B cell (primary cell): ENCODE measurements at regions of chr15 and their contacts with region 1.

Region 1: DNA sequence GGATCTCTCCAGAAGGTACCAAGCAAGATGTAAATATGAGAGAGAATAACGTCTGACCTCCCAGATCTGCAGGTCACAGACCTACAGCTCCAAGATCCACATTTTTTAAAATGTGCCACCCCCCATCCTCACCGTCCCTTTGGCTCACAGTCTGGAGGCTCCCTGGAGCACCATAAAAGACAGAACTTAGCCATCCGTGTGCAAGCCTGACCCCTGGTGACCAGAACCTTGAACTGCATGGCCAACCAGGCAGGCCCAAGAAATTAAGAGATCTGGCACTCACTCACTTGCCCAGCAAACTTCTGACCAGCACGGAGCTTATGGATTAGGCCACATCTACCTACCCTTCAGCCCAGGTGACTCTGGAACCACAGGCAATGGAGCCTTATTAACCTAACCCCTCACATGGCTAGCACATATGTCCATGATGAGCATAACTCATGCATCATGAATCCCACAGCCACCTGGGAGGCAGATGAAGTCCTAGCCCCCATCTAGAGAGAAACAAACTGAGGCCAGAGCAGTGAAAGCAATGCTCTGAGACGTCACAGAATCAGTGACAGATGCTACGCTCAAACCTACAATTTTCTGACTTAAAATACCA is 275.3 kb downstream of the UACA start:
- DNase-seq: peak; percentile 81
- ATAC-seq: no peak
- H3K4me3 ChIP-seq: no peak overlapping the region
- H3K4me3 Mint-ChIP-seq: no peak overlapping the region
- H3K27ac ChIP-seq: no peak overlapping the region
- H3K27ac Mint-ChIP-seq: peak overlapping the region; percentile 52
- H3K4me1 ChIP-seq: peaks cover 44 to 55% of the 10 kb centered on the region in 2 donors
- H3K4me1 Mint-ChIP-seq: peaks cover 53% of the 10 kb centered on the region
- H3K27me3 ChIP-seq: no peaks in the 10 kb centered on the region
- H3K27me3 Mint-ChIP-seq: no peaks in the 10 kb centered on the region
- CTCF ChIP-seq: peak; percentile 92

Region 2: DNA sequence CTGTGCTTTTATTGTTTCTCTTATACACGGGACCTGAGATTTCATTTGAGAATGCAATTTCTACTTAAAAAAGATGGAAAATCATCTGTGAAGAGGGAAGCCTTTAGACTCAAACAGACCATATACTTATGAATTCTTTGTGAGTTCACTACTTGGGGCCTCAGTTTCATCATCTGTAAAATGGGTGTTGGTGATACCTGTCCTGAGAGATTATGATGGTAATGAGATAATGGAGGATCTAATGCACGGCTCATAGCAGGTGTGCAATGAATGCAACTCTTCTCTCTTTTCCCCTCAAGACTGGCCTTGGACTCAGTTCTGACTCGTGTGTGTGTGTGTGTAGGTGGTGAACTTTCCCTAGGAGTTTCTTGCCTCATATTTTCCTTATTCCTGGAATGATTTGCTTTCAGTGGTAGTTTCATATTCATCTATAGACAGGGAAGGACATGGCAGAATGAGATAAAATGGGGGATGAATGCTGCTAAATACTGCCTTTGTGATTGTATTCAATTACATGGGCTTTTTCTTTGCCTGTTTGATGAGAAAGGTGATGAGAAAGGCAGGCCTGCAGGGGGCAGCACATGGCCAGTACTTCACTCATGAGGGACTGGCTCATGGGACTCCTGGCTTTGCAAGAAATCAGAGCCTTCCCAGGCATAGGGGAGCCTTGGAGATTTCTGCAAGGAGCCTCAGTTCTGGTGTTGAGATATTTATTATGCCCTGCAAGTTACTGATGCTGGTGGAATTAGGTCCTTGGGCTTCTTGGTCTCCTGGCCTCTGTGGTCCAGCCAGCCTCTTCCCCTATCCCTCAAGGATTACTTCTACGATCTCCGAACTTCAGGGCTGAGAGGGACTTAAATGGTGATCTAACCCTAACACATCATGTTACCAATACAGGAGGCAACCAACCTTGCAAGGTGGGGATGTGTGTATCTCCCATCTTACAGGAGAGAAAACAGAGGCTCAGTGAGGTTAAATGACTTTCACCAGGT is 964.8 kb before region 1 on chr15:
- CTCF ChIA-PET with region 1: interaction called, 4 read pairs
- POLR2A ChIA-PET with region 1: no interaction called
- intact Hi-C with region 1: loop called (anchors 1 kb)
- DNase-seq: peak; percentile 47
- ATAC-seq: no peak
- H3K4me3 ChIP-seq: no peak overlapping the region
- H3K4me3 Mint-ChIP-seq: no peak overlapping the region
- H3K27ac ChIP-seq: no peak overlapping the region
- H3K27ac Mint-ChIP-seq: no peak overlapping the region
- H3K4me1 ChIP-seq: no peaks in the 10 kb centered on the region
- H3K4me1 Mint-ChIP-seq: no peaks in the 10 kb centered on the region
- H3K27me3 ChIP-seq: peaks cover 0 to 7% (median 2%) of the 10 kb centered on the region in 4 experiments
- H3K27me3 Mint-ChIP-seq: peaks cover 8% of the 10 kb centered on the region
- CTCF ChIP-seq: peak; percentile 70

Region 3: GRCh38 chr15:69729161-69729748 is 758.8 kb before region 1 on chr15:
- CTCF ChIA-PET with region 1: interaction called, 10 read pairs
- POLR2A ChIA-PET with region 1: no interaction called
- intact Hi-C with region 1: loop called (anchors 1 kb)
- DNase-seq: peak; percentile 76
- ATAC-seq: peak; percentile 57
- H3K4me3 ChIP-seq: no peak overlapping the region
- H3K4me3 Mint-ChIP-seq: no peak overlapping the region
- H3K27ac ChIP-seq: no peak overlapping the region
- H3K27ac Mint-ChIP-seq: peak overlapping the region; percentile 10
- H3K4me1 ChIP-seq: peaks cover 6 to 20% of the 10 kb centered on the region in 2 donors
- H3K4me1 Mint-ChIP-seq: peaks cover 26% of the 10 kb centered on the region
- H3K27me3 ChIP-seq: peaks cover 0 to 10% (median 1%) of the 10 kb centered on the region in 4 experiments
- H3K27me3 Mint-ChIP-seq: peaks cover 6% of the 10 kb centered on the region
- CTCF ChIP-seq: peak; percentile 92

Region 4: GRCh38 chr15:70196314-70197291 is 291.5 kb before region 1 on chr15:
- CTCF ChIA-PET with region 1: interaction called, 4 read pairs
- POLR2A ChIA-PET with region 1: interaction called, 3 read pairs
- intact Hi-C with region 1: loop called (anchors 5 kb)
- DNase-seq: peak; percentile 86
- ATAC-seq: peak; percentile 85
- H3K4me3 ChIP-seq: no peak overlapping the region
- H3K4me3 Mint-ChIP-seq: peak overlapping the region; percentile 72
- H3K27ac ChIP-seq: no peak overlapping the region
- H3K27ac Mint-ChIP-seq: peak overlapping the region; percentile 89
- H3K4me1 ChIP-seq: peaks cover 33 to 57% of the 10 kb centered on the region in 2 donors
- H3K4me1 Mint-ChIP-seq: peaks cover 51% of the 10 kb centered on the region
- H3K27me3 ChIP-seq: peaks cover 0 to 16% (median 6%) of the 10 kb centered on the region in 4 experiments
- H3K27me3 Mint-ChIP-seq: peaks cover 26% of the 10 kb centered on the region
- CTCF ChIP-seq: no peak

Region 5: GRCh38 chr15:70466895-70467529 is 21.1 kb before region 1 on chr15:
- CTCF ChIA-PET with region 1: interaction called, 81 read pairs
- POLR2A ChIA-PET with region 1: no interaction called
- intact Hi-C with region 1: loop called (anchors 2 kb)
- DNase-seq: peak; percentile 70
- ATAC-seq: peak; percentile 84
- H3K4me3 ChIP-seq: no peak overlapping the region
- H3K4me3 Mint-ChIP-seq: no peak overlapping the region
- H3K27ac ChIP-seq: no peak overlapping the region
- H3K27ac Mint-ChIP-seq: peak overlapping the region; percentile 3
- H3K4me1 ChIP-seq: peaks cover 11 to 15% of the 10 kb centered on the region in 2 donors
- H3K4me1 Mint-ChIP-seq: peaks cover 21% of the 10 kb centered on the region
- H3K27me3 ChIP-seq: peaks cover 0 to 12% (median under 1%) of the 10 kb centered on the region in 4 experiments
- H3K27me3 Mint-ChIP-seq: peaks cover 9% of the 10 kb centered on the region
- CTCF ChIP-seq: peak; percentile 71

Region 6: DNA sequence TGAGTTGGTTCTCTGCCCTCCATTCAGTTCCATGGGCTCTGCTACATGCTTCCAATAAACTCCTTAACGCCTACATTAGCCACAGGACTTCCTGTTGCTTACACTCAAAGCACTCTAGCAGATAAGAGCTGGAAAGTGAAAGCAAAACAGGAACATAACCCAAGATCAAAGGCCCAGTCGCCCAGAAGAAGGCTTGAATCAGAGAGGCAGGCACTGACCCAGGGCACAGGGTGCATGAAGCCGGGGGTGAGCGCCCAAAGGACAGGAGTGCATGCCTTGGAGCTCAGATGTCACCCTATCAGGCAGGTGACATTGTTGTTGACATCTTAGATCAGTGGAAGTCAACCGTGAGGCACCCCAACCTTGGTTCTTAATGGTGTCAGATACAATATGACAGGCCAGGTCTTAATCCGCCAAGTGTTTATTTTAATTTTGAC is 40.2 kb after region 1 on chr15:
- CTCF ChIA-PET with region 1: interaction called, 10 read pairs
- POLR2A ChIA-PET with region 1: no interaction called
- intact Hi-C with region 1: loop called (anchors 5 kb)
- DNase-seq: peak; percentile 77
- ATAC-seq: peak; percentile 61
- H3K4me3 ChIP-seq: peak overlapping the region in 2 of 5 experiments; percentile 10 to 51
- H3K4me3 Mint-ChIP-seq: peak overlapping the region; percentile 70
- H3K27ac ChIP-seq: peak overlapping the region; percentile 54 to 78
- H3K27ac Mint-ChIP-seq: peak overlapping the region; percentile 88
- H3K4me1 ChIP-seq: peaks cover 36 to 42% of the 10 kb centered on the region in 2 donors
- H3K4me1 Mint-ChIP-seq: peaks cover 49% of the 10 kb centered on the region
- H3K27me3 ChIP-seq: peaks cover 0 to under 1% (median 0%) of the 10 kb centered on the region in 4 experiments
- H3K27me3 Mint-ChIP-seq: peaks cover 7% of the 10 kb centered on the region
- CTCF ChIP-seq: no peak